ENCODE measurements at regions of chr12 and their contacts with region 1.

Region 1: GRCh38 chr12:32885831-32886230 is 10.7 kb downstream of the PKP2 start:
- DNase-seq: no peak
- ATAC-seq: no peak
- H3K4me3 ChIP-seq: peak overlapping the region in 1 of 12 donors; percentile 7
- H3K27ac ChIP-seq: peak overlapping the region in 9 of 12 donors; percentile 7 to 90 (median 53)
- H3K4me1 ChIP-seq: peaks cover 0 to 66% (median 8%) of the 10 kb centered on the region in 12 donors
- H3K27me3 ChIP-seq: no peaks in the 10 kb centered on the region
- CTCF ChIP-seq: no peak
- POLR2A ChIP-seq: no peak

Region 2: GRCh38 chr12:32854097-32854496 is 31.7 kb before region 1 on chr12:
- intact Hi-C with region 1: loop called in 1 of 10 experiments (anchors 5 kb)
- DNase-seq: peak in 1 of 5 donors; percentile 26
- ATAC-seq: peak; percentile 84 to 93 (median 88)
- H3K4me3 ChIP-seq: no peak overlapping the region
- H3K27ac ChIP-seq: peak overlapping the region in 10 of 12 donors; percentile 29 to 80 (median 56)
- H3K4me1 ChIP-seq: peaks cover 0 to 44% (median 7%) of the 10 kb centered on the region in 12 donors
- H3K27me3 ChIP-seq: no peaks in the 10 kb centered on the region
- CTCF ChIP-seq: no peak
- POLR2A ChIP-seq: no peak